Activated CD4-positive, alpha-beta memory T cell treated with anti-CD3 and anti-CD28 coated beads for 36 hours (primary cell): ENCODE measurements at regions of chr5 and their contacts with region 1.

Region 1: DNA sequence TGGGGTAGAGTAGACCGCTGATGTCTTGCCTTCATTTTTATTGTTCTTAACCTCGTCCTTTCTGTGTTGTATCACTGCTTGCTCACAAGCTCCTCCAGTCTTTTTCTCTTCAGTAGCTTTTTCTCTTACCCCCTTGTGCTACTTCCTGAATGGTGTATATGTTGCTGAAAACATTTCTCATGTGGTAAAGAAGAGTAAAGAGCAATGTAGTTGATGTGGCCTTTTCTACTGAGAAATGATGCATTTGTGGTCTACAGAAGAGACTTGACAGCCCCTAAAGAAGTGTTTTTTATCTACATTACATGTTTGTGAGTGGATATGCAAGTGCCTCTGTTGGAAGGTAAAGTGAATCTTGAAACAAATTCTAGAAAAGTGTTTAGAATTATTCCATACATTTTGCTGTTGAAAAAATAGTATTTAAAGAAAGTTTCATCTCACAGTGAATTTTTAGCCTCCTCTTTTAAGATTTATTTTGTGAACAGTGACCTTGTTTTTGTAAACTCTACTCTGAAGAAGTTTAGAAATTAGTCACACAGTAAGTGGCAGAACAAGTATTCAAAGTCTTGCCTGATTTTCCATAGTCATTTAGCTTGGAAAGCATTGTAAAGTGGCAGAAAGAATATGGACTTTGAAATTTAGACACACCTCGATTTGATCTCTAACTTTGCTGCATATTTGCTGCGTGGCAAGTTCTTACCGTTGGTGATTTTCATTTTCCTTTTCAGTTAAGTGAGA is 17.4 kb downstream of the CDC42SE2 start:
- DNase-seq: no peak
- H3K4me3 Mint-ChIP-seq: peak overlapping the region; percentile 68
- H3K27ac Mint-ChIP-seq: peak overlapping the region; percentile 98
- H3K4me1 Mint-ChIP-seq: peaks cover 86% of the 10 kb centered on the region
- H3K27me3 Mint-ChIP-seq: no peaks in the 10 kb centered on the region

Region 2: DNA sequence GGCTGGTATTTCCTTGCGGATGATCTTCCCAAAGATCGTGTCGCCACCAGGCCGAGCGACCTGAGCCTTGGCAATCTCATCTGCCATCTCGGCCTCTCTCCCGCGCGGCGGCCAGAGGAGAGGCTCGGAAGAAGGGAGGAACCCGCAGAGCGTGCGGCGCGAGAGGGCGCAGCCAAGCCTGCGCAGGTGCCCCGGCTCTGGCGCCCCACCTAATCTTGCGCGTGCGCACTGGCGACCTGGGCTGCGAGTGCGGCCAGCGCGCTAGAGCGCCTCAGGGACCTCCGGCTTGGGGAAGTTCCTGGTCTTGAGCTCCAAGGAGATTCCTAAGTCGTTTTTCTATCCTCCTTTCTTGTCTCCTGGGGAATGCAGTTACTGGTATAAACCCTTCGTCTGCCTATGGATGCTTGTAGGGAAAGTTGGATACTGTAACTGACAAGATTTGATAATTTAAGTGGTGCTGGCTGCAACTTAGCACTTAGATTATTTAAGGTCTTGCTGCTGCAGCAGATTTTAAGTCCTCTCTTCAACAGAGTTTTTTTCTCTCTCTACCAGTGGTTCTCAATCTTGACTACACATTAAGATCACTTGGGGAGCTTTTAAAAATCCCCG is 116.1 kb before region 1 on chr5 and contains the start of gene HINT1:
- CTCF ChIA-PET with region 1: no interaction called
- POLR2A ChIA-PET with region 1: interaction called, 3 read pairs
- intact Hi-C with region 1: loop called (anchors 1 kb)
- DNase-seq: peak; percentile 95
- H3K4me3 Mint-ChIP-seq: peak within 1 kb of the TSS; percentile 98
- H3K27ac Mint-ChIP-seq: peak within 1 kb of the TSS; percentile 99
- H3K4me1 Mint-ChIP-seq: peaks cover 45% of the 10 kb centered on the region
- H3K27me3 Mint-ChIP-seq: no peaks in the 10 kb centered on the region
- total RNA-seq, gene HINT1: 349 to 361 TPM

Region 3: GRCh38 chr5:131794586-131794985 is 513.3 kb after region 1 on chr5:
- CTCF ChIA-PET with region 1: no interaction called
- POLR2A ChIA-PET with region 1: no interaction called
- intact Hi-C with region 1: no loop called
- DNase-seq: no peak
- H3K4me3 Mint-ChIP-seq: peak overlapping the region; percentile 13
- H3K27ac Mint-ChIP-seq: no peak overlapping the region
- H3K4me1 Mint-ChIP-seq: peaks cover 40% of the 10 kb centered on the region
- H3K27me3 Mint-ChIP-seq: no peaks in the 10 kb centered on the region